IMR-90 (cell line): ENCODE measurements at regions of chr1 and their contacts with region 1.

Region 1: GRCh38 chr1:67535474-67535873 is 105.3 kb upstream of the SERBP1 start:
- DNase-seq: peak; percentile 87
- ATAC-seq: peak; percentile 82
- H3K4me3 ChIP-seq: no peak overlapping the region
- H3K27ac ChIP-seq: no peak overlapping the region
- H3K4me1 ChIP-seq: peaks cover 2% of the 10 kb centered on the region; the same call in 1 of the 2 replicates
- H3K27me3 ChIP-seq: no peaks in the 10 kb centered on the region
- CTCF ChIP-seq: peak; percentile 99
- POLR2A ChIP-seq: 0 out of 2 replicates have a peak, but pooled peaks have one; percentile 21
- RAD21 ChIP-seq: peak; percentile 98

Region 2: GRCh38 chr1:67561704-67562113 is 26.2 kb after region 1 on chr1:
- CTCF ChIA-PET with region 1: interaction called, 6 read pairs
- POLR2A ChIA-PET with region 1: no interaction called
- dilution Hi-C with region 1: no loop called
- in situ Hi-C with region 1: no loop called
- intact Hi-C with region 1: loop called (anchors 2 kb)
- DNase-seq: peak; percentile 85
- ATAC-seq: peak; percentile 82
- H3K4me3 ChIP-seq: no peak overlapping the region
- H3K27ac ChIP-seq: no peak overlapping the region
- H3K4me1 ChIP-seq: peaks cover 6% of the 10 kb centered on the region
- H3K27me3 ChIP-seq: no peaks in the 10 kb centered on the region
- CTCF ChIP-seq: peak; percentile 89
- POLR2A ChIP-seq: no peak
- RAD21 ChIP-seq: peak; percentile 92

Region 3: DNA sequence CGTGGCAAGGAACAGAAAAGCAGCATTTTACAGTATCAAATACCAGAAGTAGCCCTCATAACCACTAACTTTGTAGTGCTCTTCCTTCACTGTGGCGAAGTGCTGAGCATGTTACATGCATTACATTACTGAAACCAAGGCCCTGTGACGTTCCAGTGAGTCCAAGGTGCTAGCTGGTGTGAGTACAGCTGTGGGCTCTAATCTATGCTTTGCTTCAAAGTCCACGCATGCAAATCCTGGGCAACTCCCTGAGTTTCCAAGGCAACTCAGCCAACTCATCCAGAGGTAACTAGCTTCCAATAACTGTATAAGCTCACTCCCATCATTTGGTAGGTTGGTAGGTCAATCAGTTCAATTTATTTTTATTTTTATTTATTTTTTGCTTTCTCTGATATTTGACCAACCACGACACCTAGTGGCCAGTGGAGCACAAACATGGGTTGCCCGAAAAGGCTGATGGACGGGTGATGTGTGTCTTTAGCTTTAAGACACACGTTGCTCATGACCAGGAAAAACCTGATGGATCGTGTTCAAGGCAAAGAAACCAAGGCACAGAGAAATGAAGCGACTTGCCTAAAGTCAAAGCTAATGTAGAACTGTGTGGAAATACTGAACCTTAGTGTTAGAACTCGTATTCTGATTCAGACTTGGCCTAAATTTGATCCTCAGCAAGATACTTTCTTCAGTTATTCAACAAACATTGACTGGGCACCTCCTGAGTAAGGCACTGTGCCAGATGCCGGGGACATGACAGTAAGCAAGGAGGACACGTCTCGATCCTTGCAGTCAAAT is 224.8 kb after region 1 on chr1:
- CTCF ChIA-PET with region 1: interaction called, 46 read pairs
- POLR2A ChIA-PET with region 1: no interaction called
- dilution Hi-C with region 1: no loop called
- in situ Hi-C with region 1: loop called (anchors 5 kb)
- intact Hi-C with region 1: loop called (anchors 1 kb)
- DNase-seq: peak; percentile 86
- ATAC-seq: peak; percentile 79
- H3K4me3 ChIP-seq: no peak overlapping the region
- H3K27ac ChIP-seq: peak overlapping the region; percentile 28
- H3K4me1 ChIP-seq: peaks cover 19% of the 10 kb centered on the region
- H3K27me3 ChIP-seq: no peaks in the 10 kb centered on the region
- CTCF ChIP-seq: peak; percentile 78
- POLR2A ChIP-seq: no peak
- RAD21 ChIP-seq: peak; percentile 74

Region 4: GRCh38 chr1:67832737-67833601 is 297.5 kb after region 1 on chr1 and contains the start of gene GNG12:
- CTCF ChIA-PET with region 1: interaction called, 4 read pairs
- POLR2A ChIA-PET with region 1: no interaction called
- dilution Hi-C with region 1: no loop called
- in situ Hi-C with region 1: no loop called
- intact Hi-C with region 1: loop called (anchors 2 kb)
- DNase-seq: peak; percentile 73
- ATAC-seq: peak; percentile 89
- H3K4me3 ChIP-seq: peak within 1 kb of the TSS; percentile 93
- H3K27ac ChIP-seq: peak within 1 kb of the TSS; percentile 75
- H3K4me1 ChIP-seq: peaks cover 2% of the 10 kb centered on the region; the same call in 1 of the 2 replicates
- H3K27me3 ChIP-seq: no peaks in the 10 kb centered on the region
- CTCF ChIP-seq: no peak
- POLR2A ChIP-seq: peak; percentile 66
- RAD21 ChIP-seq: no peak
- total RNA-seq, gene GNG12: 132 and 233 TPM in 2 replicates

Region 5: DNA sequence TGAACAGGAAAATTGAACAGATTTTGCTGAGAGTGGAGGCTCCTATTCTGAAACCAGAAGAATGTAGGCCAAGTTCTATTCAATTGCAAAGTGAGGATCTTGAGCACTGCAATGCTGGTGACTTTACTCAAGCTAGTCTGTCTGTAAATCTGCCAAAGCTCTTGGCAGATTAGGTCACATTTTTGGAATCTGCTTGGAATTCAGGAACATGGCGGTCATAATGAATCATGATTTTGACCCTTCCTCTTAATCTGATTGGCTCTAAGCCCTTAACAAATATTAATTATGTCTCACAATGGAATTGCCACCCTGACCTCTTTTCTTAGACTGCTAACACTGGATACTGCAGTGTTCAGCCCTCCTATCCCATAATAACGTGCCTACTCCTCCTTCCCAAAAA is 305.0 kb after region 1 on chr1:
- CTCF ChIA-PET with region 1: no interaction called
- POLR2A ChIA-PET with region 1: no interaction called
- dilution Hi-C with region 1: no loop called
- in situ Hi-C with region 1: loop called (anchors 10 kb)
- intact Hi-C with region 1: no loop called
- DNase-seq: peak; percentile 94
- ATAC-seq: peak; percentile 79
- H3K4me3 ChIP-seq: no peak overlapping the region
- H3K27ac ChIP-seq: no peak overlapping the region
- H3K4me1 ChIP-seq: peaks cover 10% of the 10 kb centered on the region
- H3K27me3 ChIP-seq: no peaks in the 10 kb centered on the region
- CTCF ChIP-seq: no peak
- POLR2A ChIP-seq: no peak
- RAD21 ChIP-seq: no peak

Region 6: DNA sequence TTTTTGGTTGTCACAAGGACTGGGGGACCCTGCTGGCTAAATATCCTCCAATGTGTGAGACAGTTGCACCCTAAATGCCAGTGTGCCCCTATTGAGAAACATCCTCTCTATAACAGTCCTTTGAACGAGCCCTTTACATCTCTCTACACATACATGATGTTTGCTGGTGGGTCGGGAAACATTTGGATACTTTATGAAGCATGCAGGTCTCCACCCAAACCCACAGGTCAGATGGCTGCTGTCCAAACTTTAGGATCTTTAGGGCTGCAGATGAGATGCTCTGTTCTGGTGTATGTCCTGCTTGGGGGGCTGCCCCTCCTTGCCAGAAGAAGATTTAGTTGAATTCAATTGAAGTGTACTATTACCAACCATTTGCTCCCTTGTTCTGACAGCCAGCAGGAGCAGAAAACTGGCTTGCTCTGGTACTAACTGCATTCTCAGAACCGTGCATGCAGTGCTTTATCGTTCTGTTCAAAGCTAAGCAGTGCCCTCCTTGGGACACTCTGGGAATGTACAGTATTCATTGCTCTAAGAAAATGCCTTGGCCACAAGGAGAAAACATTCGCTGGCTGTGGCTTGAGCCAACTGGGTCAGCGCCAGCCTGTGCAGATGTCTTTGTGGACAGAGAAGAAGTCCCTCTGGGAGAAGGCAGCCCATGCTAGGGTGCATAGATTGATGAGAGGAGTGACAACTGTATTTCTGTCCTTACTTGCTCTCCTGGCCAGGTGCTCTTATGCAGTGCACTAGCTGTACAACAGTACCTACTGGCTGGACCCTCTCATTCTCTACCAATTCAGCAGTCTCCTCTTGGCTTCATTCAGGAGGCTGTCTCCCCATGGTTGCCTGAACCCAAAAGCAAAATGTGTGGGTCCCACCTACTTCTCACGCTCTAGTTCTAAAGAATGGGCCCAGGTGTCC is 576.3 kb after region 1 on chr1:
- CTCF ChIA-PET with region 1: interaction called, 4 read pairs
- POLR2A ChIA-PET with region 1: no interaction called
- dilution Hi-C with region 1: no loop called
- in situ Hi-C with region 1: no loop called
- intact Hi-C with region 1: loop called (anchors 1 kb)
- DNase-seq: peak; percentile 93
- ATAC-seq: peak; percentile 85
- H3K4me3 ChIP-seq: no peak overlapping the region
- H3K27ac ChIP-seq: no peak overlapping the region
- H3K4me1 ChIP-seq: peaks cover 9% of the 10 kb centered on the region
- H3K27me3 ChIP-seq: no peaks in the 10 kb centered on the region
- CTCF ChIP-seq: peak; percentile 83
- POLR2A ChIP-seq: 0 out of 2 replicates have a peak, but pooled peaks have one; percentile 30
- RAD21 ChIP-seq: peak; percentile 95

Region 7: GRCh38 chr1:68358439-68358838 is 823.0 kb after region 1 on chr1:
- CTCF ChIA-PET with region 1: no interaction called
- POLR2A ChIA-PET with region 1: no interaction called
- dilution Hi-C with region 1: no loop called
- in situ Hi-C with region 1: loop called (anchors 25 kb)
- intact Hi-C with region 1: no loop called
- DNase-seq: peak; percentile 8
- ATAC-seq: peak; percentile 54
- H3K4me3 ChIP-seq: no peak overlapping the region
- H3K27ac ChIP-seq: no peak overlapping the region
- H3K4me1 ChIP-seq: peaks cover 5% of the 10 kb centered on the region
- H3K27me3 ChIP-seq: no peaks in the 10 kb centered on the region
- CTCF ChIP-seq: no peak
- POLR2A ChIP-seq: no peak
- RAD21 ChIP-seq: no peak